Ascending aorta (tissue), 2 donors: ENCODE measurements at regions of chr12 and their contacts with region 1.

Region 1: GRCh38 chr12:11486623-11487444 is 91.5 kb upstream of the PRB2 start:
- DNase-seq: peak in 1 of 2 donors; percentile 89
- H3K4me3 ChIP-seq: no peak overlapping the region
- H3K27ac ChIP-seq: no peak overlapping the region
- H3K4me1 ChIP-seq: no peaks in the 10 kb centered on the region
- H3K27me3 ChIP-seq: no peaks in the 10 kb centered on the region
- CTCF ChIP-seq: peak; percentile 87 to 97 (median 92)

Region 2: DNA sequence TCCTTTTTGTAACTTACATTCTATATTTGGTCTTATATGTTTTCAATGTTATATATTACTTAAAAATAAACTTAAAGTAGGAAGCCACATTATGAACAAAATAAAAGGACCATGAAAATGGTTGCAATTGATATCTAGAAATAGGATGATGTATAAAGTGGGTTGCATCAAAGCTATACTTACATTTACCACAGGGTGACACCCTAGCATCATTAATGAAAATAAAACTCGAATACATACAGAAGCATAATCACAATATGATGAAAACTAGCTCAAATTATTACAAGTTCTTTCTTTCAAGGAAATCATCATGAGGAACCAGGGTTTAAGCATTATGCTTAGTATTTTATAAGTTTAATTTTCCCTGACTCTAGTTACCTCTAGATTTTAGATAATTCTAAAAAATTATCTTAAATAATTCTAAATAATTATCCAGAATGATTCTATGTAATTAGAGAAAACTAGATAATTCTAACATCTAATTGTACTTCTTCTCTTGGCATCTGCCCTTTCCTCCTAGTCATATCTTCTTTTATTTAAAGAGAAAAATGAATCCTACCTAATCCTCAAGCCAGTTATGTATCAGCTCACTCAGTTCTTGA is 715.6 kb before region 1 on chr12:
- intact Hi-C with region 1: loop called (anchors 2 kb)
- DNase-seq: no peak
- H3K4me3 ChIP-seq: no peak overlapping the region
- H3K27ac ChIP-seq: no peak overlapping the region
- H3K4me1 ChIP-seq: no peaks in the 10 kb centered on the region
- H3K27me3 ChIP-seq: no peaks in the 10 kb centered on the region
- CTCF ChIP-seq: peak; percentile 57 to 71 (median 68)

Region 3: DNA sequence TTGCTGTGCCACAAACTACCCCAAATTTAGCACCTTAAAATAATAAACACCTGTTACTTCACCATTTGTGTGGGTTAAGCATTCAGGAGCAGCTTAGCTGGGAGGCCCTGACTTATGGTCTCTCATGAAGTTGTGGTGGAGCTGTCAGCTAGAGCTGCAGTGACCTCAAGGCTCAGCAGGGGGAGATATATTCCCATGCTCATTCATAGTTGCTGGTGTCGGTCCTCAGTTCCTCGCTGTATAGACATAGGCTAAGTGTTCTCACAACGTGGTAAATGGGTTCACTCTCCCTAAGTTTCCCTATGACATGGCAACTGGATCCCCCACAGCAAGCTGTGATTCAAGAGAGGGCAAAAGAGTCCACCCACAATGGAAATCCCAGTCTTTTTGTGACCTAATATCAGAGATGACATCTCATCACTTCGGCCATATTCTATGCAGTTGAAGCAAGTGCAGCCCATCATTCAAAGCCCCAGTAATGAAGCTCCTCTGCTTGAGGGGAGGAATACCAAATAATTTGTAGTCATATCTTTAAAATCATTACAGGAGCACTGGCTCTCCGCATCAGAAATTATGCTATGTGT is 258.4 kb before region 1 on chr12:
- intact Hi-C with region 1: loop called (anchors 5 kb)
- DNase-seq: no peak
- H3K4me3 ChIP-seq: no peak overlapping the region
- H3K27ac ChIP-seq: no peak overlapping the region
- H3K4me1 ChIP-seq: no peaks in the 10 kb centered on the region
- H3K27me3 ChIP-seq: no peaks in the 10 kb centered on the region
- CTCF ChIP-seq: peak in 2 of 3 experiments; percentile 26 to 34

Region 4: DNA sequence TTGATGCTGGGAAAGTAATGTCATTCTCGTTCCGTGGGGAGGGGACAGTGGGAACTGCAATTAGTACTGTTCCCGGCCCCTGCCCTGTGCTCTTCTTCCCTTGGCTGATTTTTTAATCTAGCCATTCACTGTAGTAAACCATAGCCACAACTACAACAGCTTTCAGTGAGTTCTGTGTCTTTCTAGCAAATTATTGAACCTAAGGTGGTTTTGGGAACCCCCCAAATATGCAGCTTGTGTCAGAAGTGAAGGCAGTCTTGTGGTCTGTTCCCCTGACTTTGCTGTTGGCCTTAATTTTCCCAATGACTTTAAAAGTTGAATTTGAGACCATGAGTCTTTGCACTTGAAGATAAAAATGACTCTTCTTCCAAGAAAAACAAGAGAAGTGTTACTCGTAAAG is 48.3 kb after region 1 on chr12:
- intact Hi-C with region 1: no loop called
- DNase-seq: no peak
- H3K4me3 ChIP-seq: no peak overlapping the region
- H3K27ac ChIP-seq: no peak overlapping the region
- H3K4me1 ChIP-seq: no peaks in the 10 kb centered on the region
- H3K27me3 ChIP-seq: no peaks in the 10 kb centered on the region
- CTCF ChIP-seq: no peak